ENCODE measurements at regions of chr2 and their contacts with region 1.

Region 1: GRCh38 chr2:162123806-162124758 is 28.0 kb downstream of the GCG start:
- DNase-seq: no peak
- H3K4me3 Mint-ChIP-seq: no peak overlapping the region
- H3K27ac Mint-ChIP-seq: no peak overlapping the region
- H3K4me1 Mint-ChIP-seq: peaks cover 3% of the 10 kb centered on the region
- H3K27me3 Mint-ChIP-seq: no peaks in the 10 kb centered on the region

Region 2: DNA sequence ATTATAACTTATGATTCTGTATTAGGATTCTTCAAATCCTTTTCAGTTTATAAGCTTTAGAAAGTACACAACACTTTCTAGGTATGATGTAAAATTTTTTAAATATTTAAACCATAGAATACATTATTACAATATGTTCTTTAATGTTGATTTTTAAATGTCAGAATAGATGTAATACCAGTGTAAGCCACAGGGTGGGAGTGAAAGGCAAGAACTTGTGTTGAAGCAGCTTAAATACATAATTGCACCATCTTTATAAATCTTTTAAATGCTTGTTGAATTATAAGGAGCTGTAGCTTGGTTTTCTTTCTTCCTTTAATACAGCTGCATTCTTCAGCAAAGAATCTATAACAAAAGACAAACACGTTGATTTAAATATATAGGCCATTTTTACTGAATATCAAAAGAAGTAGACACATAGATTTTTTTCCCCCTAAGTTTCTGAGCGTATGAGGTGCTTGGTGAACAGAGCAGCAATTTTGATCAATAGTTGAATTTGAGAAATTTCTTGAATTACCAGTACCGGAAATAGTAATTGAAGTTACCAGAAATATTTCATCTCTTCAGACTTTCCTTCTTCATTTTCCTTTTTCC is 900.8 kb before region 1 on chr2:
- CTCF ChIA-PET with region 1: interaction called, 4 read pairs
- intact Hi-C with region 1: loop called (anchors 5 kb)
- DNase-seq: peak; percentile 22
- H3K4me3 Mint-ChIP-seq: no peak overlapping the region
- H3K27ac Mint-ChIP-seq: no peak overlapping the region
- H3K4me1 Mint-ChIP-seq: no peaks in the 10 kb centered on the region
- H3K27me3 Mint-ChIP-seq: no peaks in the 10 kb centered on the region

Region 3: DNA sequence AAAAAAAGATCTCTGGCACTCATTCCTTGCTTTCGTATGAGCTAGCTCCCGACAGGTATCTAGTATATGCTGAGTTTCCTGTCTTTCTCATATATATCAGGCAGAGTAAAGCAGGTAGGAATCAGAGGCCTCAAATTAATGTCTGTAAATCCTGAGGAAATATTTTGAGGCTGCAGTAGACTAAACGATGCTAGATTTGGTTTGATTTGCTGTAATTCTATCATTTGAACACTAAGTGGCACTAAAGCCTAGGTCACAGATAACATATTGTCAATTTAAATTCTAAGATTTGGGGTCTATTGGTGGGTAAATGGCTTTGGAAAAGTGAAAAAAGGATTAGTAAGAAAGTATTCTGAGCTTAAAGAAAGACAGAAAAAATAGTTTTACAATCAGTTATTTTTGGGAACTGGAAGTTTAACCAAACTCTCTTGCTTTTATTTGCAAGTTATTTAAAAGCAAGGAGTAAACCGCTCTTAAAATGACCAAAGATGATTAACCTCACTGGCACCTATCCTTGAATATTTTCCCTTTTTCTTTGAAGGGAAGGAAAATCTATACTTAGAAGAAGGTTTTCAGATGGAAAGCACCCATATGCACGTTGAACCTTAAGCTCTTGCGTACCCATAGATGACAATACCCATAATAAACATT is 537.4 kb before region 1 on chr2:
- CTCF ChIA-PET with region 1: interaction called, 23 read pairs
- intact Hi-C with region 1: loop called (anchors 1 kb)
- DNase-seq: no peak
- H3K4me3 Mint-ChIP-seq: no peak overlapping the region
- H3K27ac Mint-ChIP-seq: no peak overlapping the region
- H3K4me1 Mint-ChIP-seq: no peaks in the 10 kb centered on the region
- H3K27me3 Mint-ChIP-seq: peaks cover 4% of the 10 kb centered on the region

Region 4: DNA sequence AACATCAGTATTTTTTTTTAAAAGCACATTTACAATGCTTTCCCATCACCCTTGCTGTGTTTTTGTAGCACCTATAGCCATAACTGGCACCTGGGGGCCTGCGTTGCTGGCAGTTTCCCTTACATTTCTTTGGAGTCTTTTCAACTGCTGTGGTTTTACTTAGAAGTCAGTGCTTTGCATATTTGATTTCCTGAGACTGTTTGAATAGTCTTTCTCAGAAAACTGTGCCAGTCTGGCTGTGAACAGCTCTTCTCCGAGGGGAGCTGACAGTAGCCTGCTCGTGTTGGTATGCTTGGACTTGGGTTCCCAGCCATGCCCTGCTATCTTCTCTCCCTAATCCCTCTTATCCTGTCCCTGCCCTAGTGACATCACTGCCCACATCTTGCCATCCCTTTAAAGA is 131.6 kb before region 1 on chr2:
- CTCF ChIA-PET with region 1: interaction called, 11 read pairs
- intact Hi-C with region 1: loop called (anchors 5 kb)
- DNase-seq: peak; percentile 80
- H3K4me3 Mint-ChIP-seq: peak overlapping the region; percentile 78
- H3K27ac Mint-ChIP-seq: peak overlapping the region; percentile 97
- H3K4me1 Mint-ChIP-seq: peaks cover 49% of the 10 kb centered on the region
- H3K27me3 Mint-ChIP-seq: no peaks in the 10 kb centered on the region

Region 5: DNA sequence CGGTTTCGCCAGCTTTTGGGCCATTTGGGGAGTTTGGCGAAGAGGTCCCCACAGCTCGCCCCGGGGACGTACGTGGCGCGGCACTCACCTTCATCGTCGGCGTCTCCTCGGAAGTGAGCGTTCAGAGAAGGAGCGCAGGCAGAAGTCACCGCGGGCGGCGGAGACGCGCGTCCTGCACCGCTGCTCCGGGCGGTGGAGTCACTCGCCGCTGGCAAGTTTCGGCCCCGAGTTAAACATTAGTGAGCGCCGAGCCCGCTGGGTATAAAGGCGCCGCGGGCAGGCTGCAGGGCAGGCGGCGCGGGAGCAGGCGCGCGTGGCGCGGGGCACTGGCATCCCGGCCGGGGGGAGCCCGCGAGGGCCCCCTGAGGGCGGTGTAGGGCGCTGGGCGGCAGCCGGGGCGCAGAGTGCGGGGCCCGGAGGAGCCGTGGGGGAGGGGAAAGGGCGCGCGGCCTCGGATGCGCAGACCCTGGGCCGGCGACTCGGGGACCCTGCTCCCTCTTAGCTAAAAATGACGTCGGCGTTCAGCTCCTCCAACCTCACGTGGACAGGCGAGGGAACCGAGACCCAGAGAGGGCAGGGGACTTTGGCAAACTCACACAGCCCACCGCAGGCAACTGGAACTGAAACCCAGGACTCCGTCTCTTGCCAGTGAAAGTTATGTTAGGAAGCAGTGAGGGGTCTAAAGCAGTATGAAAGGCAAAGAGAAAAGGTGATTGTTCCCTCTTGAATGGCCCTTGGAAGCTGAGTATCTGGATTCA is 50.0 kb before region 1 on chr2 and contains the start of gene DPP4:
- CTCF ChIA-PET with region 1: interaction called, 4 read pairs
- intact Hi-C with region 1: loop called (anchors 2 kb)
- DNase-seq: peak; percentile 60
- H3K4me3 Mint-ChIP-seq: peak within 1 kb of the TSS; percentile 94
- H3K27ac Mint-ChIP-seq: peak within 1 kb of the TSS; percentile 79
- H3K4me1 Mint-ChIP-seq: peaks cover 48% of the 10 kb centered on the region
- H3K27me3 Mint-ChIP-seq: no peaks in the 10 kb centered on the region
- total RNA-seq, gene DPP4: 11.9 to 12.9 TPM

Measured in activated naive CD4-positive, alpha-beta T cell treated with anti-CD3 and anti-CD28 coated beads for 36 hours (primary cell).